ENCODE measurements at regions of chr17 and their contacts with region 1.

Region 1: GRCh38 chr17:56707312-56708219 is 114.1 kb downstream of the NOG start:
- DNase-seq: no peak
- ATAC-seq: no peak

Region 2: GRCh38 chr17:56610321-56610720 is 97.2 kb before region 1 on chr17:
- intact Hi-C with region 1: loop called in 1 of 2 experiments (anchors 10 kb)
- DNase-seq: no peak
- ATAC-seq: no peak

Region 3: DNA sequence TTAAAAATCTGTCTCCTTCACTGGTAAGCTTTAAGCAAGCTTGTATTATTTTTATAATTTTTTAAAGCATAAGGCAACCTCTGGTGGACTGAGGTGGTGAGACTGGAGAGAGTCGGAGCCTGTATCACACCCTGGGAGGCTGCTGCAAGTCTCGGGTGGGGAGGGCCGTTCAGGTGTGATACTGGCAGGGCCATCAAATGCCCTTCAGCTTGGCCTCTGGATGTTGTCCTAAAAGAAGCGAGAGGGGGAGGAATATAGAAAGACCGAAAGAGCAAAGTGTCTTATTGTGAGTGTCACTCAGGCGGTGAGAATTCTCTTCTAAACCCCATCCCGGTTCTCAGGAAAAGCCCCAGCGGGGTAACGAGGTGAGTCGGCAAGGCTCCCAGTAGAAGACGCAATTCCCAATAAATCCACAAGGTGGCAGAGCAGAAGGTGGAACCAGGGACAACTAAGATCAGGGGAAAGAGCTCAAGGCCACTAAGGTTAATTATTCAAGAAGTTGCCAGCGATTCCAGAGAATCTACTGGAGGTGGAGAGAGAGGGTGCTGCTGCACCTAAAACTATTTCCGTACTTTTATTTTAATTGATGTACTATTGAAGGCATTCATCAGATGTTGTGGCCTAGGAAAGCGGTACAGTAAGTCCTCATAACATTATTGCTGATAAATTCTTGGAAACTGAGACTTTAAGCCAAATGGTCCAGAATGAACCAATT is 112.0 kb after region 1 on chr17:
- intact Hi-C with region 1: no loop called
- DNase-seq: peak; percentile 49
- ATAC-seq: peak; percentile 81